GM12878 (cell line): ENCODE measurements at regions of chr11 and their contacts with region 1.

Region 1: DNA sequence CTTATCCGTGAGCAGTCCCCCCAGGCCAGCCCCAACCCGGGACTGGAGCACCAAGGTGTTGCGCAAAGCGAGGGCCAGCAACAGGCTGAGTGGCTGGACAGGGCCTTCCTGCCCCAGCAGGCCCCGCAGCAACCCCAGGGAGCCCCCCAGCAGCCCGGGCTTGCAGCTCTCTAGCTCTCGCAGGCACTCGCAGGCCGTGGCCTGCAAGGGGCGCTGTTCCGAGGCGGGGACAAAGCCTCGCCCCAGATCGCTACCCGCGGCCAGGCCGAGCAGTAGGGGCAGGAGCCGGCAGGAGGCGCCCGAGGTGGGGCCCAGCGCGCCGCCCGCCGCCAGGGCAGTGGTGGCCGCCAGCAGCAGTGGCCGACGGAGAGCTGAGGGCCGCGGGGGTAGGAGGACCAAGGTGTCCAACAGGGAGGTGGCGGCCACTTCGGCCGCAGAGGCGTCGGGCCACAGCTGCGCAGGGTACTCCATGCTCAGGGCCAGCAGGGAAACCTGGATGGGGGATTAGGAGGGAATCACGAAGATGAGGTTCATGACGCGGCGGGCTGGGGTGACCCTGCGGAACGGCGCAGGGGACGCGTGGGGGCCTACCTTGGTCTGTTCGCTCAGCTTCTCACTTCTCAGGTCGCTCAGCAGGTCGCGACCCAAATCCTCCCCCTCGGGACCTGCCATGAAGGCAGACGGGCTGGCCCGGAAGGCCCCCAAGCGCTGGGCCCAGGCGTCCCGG is 762 bp downstream of the AP5B1 start:
- DNase-seq: peak; percentile 21
- ATAC-seq: peak; percentile 94
- H3K4me3 ChIP-seq: peak overlapping the region; percentile 80
- H3K27ac ChIP-seq: peak overlapping the region; percentile 61
- H3K4me1 ChIP-seq: peaks cover 16% of the 10 kb centered on the region
- H3K27me3 ChIP-seq: no peaks in the 10 kb centered on the region
- CTCF ChIP-seq: peak; percentile 87 to 98 (median 92)
- EP300 ChIP-seq: no peak
- POLR2A ChIP-seq: peak; percentile 48
- RAD21 ChIP-seq: peak; percentile 76

Region 2: DNA sequence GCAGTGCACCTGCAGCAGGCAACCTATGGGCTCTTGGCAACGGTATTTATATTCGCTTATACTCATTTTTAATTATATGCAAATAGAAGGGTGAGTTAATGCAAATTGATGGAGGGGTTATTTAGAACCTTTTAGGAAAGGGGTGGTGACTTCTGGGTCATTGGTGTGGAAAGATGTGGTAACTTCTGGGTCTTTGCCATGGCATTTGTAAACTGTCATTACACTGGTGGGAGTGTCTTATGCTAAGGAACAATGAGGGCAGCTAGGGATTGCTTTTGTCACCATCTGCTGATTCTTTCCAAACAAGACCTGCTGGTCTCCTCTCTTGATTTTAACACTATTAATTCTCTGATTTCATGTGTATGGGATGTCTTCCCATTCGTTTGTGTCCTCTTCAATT is 79.6 kb before region 1 on chr11:
- CTCF ChIA-PET with region 1: interaction called, 10 read pairs
- POLR2A ChIA-PET with region 1: no interaction called
- RAD21 ChIA-PET with region 1: no interaction called
- SMC1A ChIA-PET with region 1: no interaction called
- in situ Hi-C with region 1: no loop called
- intact Hi-C with region 1: no loop called
- DNase-seq: no peak
- ATAC-seq: peak; percentile 89
- H3K4me3 ChIP-seq: no peak overlapping the region
- H3K27ac ChIP-seq: no peak overlapping the region
- H3K4me1 ChIP-seq: no peaks in the 10 kb centered on the region
- H3K27me3 ChIP-seq: no peaks in the 10 kb centered on the region
- CTCF ChIP-seq: no peak; a peak in 1 of 6 replicates
- EP300 ChIP-seq: no peak
- POLR2A ChIP-seq: no peak
- RAD21 ChIP-seq: no peak

Region 3: DNA sequence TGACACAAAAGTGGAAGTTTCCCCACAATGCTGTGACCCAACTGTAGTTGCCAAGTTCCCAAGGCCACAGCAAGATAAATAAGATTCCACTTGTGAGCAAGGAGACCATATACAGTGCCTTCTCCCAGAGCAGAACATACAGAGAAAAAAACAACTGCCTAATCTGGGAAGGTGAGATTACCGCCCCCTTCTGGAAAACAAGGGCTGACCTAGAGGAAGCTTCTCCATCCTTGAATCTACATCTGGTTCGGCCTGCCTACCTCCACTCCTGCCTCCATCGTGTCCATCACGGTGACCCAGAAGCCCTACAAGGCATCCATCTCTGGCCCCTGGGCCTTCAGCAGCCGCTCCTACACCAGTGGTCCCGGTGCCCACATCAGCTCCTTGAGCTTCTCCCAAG is 53.4 kb before region 1 on chr11:
- CTCF ChIA-PET with region 1: interaction called, 11 read pairs
- POLR2A ChIA-PET with region 1: no interaction called
- RAD21 ChIA-PET with region 1: no interaction called
- SMC1A ChIA-PET with region 1: interaction called, 5 read pairs
- in situ Hi-C with region 1: no loop called
- intact Hi-C with region 1: no loop called
- DNase-seq: no peak
- ATAC-seq: peak; percentile 26; the same call in 1 of the 3 replicates
- H3K4me3 ChIP-seq: no peak overlapping the region
- H3K27ac ChIP-seq: no peak overlapping the region
- H3K4me1 ChIP-seq: no peaks in the 10 kb centered on the region
- H3K27me3 ChIP-seq: no peaks in the 10 kb centered on the region; a peak in 1 of 4 replicates
- CTCF ChIP-seq: peak; percentile 7 to 25 (median 21); a peak in 2 of 6 replicates
- EP300 ChIP-seq: no peak
- POLR2A ChIP-seq: no peak
- RAD21 ChIP-seq: no peak

Region 4: GRCh38 chr11:65739022-65739421 is 41.0 kb before region 1 on chr11:
- CTCF ChIA-PET with region 1: no interaction called
- POLR2A ChIA-PET with region 1: no interaction called
- RAD21 ChIA-PET with region 1: no interaction called
- SMC1A ChIA-PET with region 1: no interaction called
- in situ Hi-C with region 1: no loop called
- intact Hi-C with region 1: no loop called
- DNase-seq: no peak
- ATAC-seq: no peak
- H3K4me3 ChIP-seq: no peak overlapping the region
- H3K27ac ChIP-seq: no peak overlapping the region
- H3K4me1 ChIP-seq: no peaks in the 10 kb centered on the region
- H3K27me3 ChIP-seq: peaks cover 0 to 3% of the 10 kb centered on the region in 2 experiments; a peak in 2 of 4 replicates
- CTCF ChIP-seq: no peak
- EP300 ChIP-seq: no peak
- POLR2A ChIP-seq: no peak
- RAD21 ChIP-seq: no peak

Region 5: DNA sequence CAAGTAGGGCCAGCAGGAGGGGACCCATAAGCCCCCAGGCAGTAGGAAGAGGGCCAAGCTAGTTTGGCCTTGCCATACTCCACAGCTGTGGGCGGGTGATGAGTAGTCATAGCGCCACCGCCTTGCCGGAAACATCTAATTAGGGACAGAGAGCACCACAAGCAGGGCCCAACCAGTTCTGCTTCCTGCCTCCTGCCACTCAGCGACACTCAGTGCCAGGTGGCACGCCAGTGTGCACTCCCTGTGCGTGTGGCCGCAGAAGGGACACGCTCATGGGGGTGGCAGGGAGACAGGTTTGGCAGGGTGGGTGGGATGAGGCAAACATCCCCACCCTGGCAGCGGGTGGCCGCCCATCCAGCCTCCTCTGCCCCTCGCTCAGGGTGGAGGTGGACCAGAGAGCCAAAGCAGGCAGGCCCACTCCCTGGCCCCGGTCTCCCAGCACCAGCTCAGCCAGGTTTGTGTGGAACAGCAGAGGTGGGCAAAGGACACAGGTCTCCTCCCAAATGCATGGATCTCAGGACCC is 11.7 kb after region 1 on chr11:
- CTCF ChIA-PET with region 1: interaction called, 62 read pairs
- POLR2A ChIA-PET with region 1: interaction called, 17 read pairs
- RAD21 ChIA-PET with region 1: interaction called, 24 read pairs
- SMC1A ChIA-PET with region 1: interaction called, 17 read pairs
- in situ Hi-C with region 1: no loop called
- intact Hi-C with region 1: no loop called
- DNase-seq: peak; percentile 73
- ATAC-seq: peak; percentile 99
- H3K4me3 ChIP-seq: no peak overlapping the region
- H3K27ac ChIP-seq: peak overlapping the region; percentile 54
- H3K4me1 ChIP-seq: peaks cover 30% of the 10 kb centered on the region
- H3K27me3 ChIP-seq: peaks cover 5 to 8% of the 10 kb centered on the region in 2 experiments; a peak in 2 of 4 replicates
- CTCF ChIP-seq: peak in 1 of 3 experiments; percentile 10; a peak in 1 of 6 replicates
- EP300 ChIP-seq: peak; percentile 21 to 49; a peak in 3 of 4 replicates
- POLR2A ChIP-seq: peak; percentile 93
- RAD21 ChIP-seq: no peak

Region 6: GRCh38 chr11:65802841-65803240 is 22.8 kb after region 1 on chr11:
- CTCF ChIA-PET with region 1: interaction called, 32 read pairs
- POLR2A ChIA-PET with region 1: interaction called, 8 read pairs
- RAD21 ChIA-PET with region 1: interaction called, 13 read pairs
- SMC1A ChIA-PET with region 1: interaction called, 7 read pairs
- in situ Hi-C with region 1: no loop called
- intact Hi-C with region 1: no loop called
- DNase-seq: peak; percentile 71
- ATAC-seq: peak; percentile 99
- H3K4me3 ChIP-seq: no peak overlapping the region
- H3K27ac ChIP-seq: no peak overlapping the region
- H3K4me1 ChIP-seq: peaks cover 15% of the 10 kb centered on the region
- H3K27me3 ChIP-seq: no peaks in the 10 kb centered on the region
- CTCF ChIP-seq: no peak
- EP300 ChIP-seq: 0 out of 4 replicates have a peak, but pooled peaks of 1 of the 2 experiments have one; percentile 44
- POLR2A ChIP-seq: peak; percentile 38; the same call in 1 of the 2 replicates
- RAD21 ChIP-seq: no peak

Region 7: DNA sequence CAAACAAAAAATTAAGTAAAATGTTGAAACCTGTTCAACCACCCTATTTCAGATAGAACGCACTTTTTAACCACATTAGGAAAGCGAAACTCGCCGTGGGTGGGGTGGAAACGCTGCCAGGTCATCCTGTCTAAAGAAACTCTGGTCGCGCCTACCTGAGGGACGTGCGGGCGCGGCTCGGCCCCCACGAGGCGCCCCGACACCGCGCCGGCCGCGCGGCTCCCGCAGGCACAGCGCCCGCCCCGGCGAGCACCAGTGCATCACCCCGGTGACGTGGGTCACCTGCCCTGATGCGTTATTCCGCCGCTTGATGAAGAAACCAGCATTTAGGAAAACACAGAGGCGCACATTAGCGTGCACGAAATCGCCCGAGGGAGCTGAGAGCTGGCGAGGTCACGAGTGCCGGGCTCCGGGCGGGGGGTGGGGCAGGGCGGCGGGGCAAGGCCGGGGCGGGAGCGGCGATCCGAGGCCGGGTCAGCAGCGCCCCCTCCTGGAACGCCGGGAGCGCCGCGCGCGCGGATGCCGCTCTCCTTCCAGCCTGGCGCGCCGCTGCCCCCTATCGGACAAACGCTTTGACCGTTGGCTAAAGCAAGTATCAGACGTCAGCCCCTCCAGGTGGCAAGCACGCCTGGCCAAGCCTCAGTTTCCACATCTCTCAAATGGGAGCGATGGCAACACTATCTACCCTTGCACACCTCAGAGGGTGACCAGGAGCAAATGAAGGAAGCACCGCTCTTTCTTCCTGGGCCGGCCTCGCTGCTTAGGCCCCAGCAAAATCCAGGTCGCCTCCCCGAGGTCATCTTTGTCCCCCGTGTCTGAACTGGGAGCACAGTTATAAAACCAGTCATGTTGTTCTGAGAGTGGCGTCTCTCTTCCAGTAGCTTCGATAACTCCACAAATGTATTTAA is 38.1 kb after region 1 on chr11:
- CTCF ChIA-PET with region 1: interaction called, 192 read pairs
- POLR2A ChIA-PET with region 1: interaction called, 13 read pairs
- RAD21 ChIA-PET with region 1: interaction called, 91 read pairs
- SMC1A ChIA-PET with region 1: interaction called, 41 read pairs
- in situ Hi-C with region 1: loop called (anchors 5 kb)
- intact Hi-C with region 1: loop called (anchors 1 kb)
- DNase-seq: no peak
- ATAC-seq: peak; percentile 94
- H3K4me3 ChIP-seq: peak overlapping the region; percentile 65
- H3K27ac ChIP-seq: no peak overlapping the region
- H3K4me1 ChIP-seq: peaks cover 3% of the 10 kb centered on the region; the same call in 1 of the 2 replicates
- H3K27me3 ChIP-seq: no peaks in the 10 kb centered on the region
- CTCF ChIP-seq: peak; percentile 97 to 99 (median 98)
- EP300 ChIP-seq: 0 out of 4 replicates have a peak, but pooled peaks of 1 of the 2 experiments have one; percentile 30
- POLR2A ChIP-seq: no peak
- RAD21 ChIP-seq: peak; percentile 87

Region 8: GRCh38 chr11:65833297-65834030 is 53.5 kb after region 1 on chr11 and contains the start of gene SNX32:
- CTCF ChIA-PET with region 1: interaction called, 13 read pairs
- POLR2A ChIA-PET with region 1: no interaction called
- RAD21 ChIA-PET with region 1: interaction called, 3 read pairs
- SMC1A ChIA-PET with region 1: no interaction called
- in situ Hi-C with region 1: no loop called
- intact Hi-C with region 1: no loop called
- DNase-seq: peak; percentile 73
- ATAC-seq: peak; percentile 100
- H3K4me3 ChIP-seq: peak within 1 kb of the TSS; percentile 64
- H3K27ac ChIP-seq: peak within 1 kb of the TSS; percentile 52; the same call in 1 of the 2 replicates
- H3K4me1 ChIP-seq: peaks cover 15% of the 10 kb centered on the region
- H3K27me3 ChIP-seq: peaks cover 0 to 7% of the 10 kb centered on the region in 2 experiments; a peak in 1 of 4 replicates
- CTCF ChIP-seq: no peak
- EP300 ChIP-seq: no peak
- POLR2A ChIP-seq: peak; percentile 40; the same call in 1 of the 2 replicates
- RAD21 ChIP-seq: no peak
- polyA plus RNA-seq, gene SNX32: 0.04 to 0.06 TPM